PC-9 (cell line): ENCODE measurements at regions of chr11 and their contacts with region 1.

Region 1: DNA sequence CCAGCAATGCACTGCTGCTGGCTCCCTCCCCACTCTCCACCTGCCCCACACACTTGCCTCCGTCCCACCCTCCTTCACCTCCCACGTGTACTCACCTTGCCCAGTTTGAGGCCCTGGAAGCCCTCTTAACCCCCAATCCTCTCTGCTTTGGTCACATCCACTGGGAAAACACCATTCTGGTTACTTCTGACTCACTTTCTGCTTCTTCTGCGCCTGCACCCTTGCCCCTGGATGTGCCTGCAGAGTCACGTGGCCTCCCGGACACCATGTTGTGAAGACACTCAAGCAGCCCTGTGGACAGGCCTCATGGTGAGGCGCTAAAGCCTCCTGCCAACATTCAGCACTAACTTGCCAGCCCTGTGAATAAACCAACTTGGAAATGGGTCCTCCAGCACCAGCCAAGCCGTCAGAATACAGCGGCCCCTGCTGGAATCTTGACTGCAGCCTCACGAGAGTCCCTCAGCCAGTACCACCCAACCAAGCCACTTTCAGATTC is 2.6 kb upstream of the NAALADL1 start:
- DNase-seq: no peak
- H3K4me3 ChIP-seq: no peak overlapping the region
- H3K27ac ChIP-seq: no peak overlapping the region
- H3K4me1 ChIP-seq: no peaks in the 10 kb centered on the region
- H3K27me3 ChIP-seq: no peaks in the 10 kb centered on the region
- CTCF ChIP-seq: no peak

Region 2: GRCh38 chr11:64506731-64507130 is 554.2 kb before region 1 on chr11:
- CTCF ChIA-PET with region 1: interaction called, 11 read pairs
- POLR2A ChIA-PET with region 1: no interaction called
- intact Hi-C with region 1: no loop called
- DNase-seq: no peak
- H3K4me3 ChIP-seq: no peak overlapping the region
- H3K27ac ChIP-seq: no peak overlapping the region
- H3K4me1 ChIP-seq: no peaks in the 10 kb centered on the region
- H3K27me3 ChIP-seq: peaks cover 98% of the 10 kb centered on the region
- CTCF ChIP-seq: no peak

Region 3: GRCh38 chr11:65454696-65455456 is 393.9 kb after region 1 on chr11:
- CTCF ChIA-PET with region 1: no interaction called
- POLR2A ChIA-PET with region 1: no interaction called
- intact Hi-C with region 1: no loop called
- DNase-seq: peak; percentile 81 to 91
- H3K4me3 ChIP-seq: peak overlapping the region; percentile 58
- H3K27ac ChIP-seq: peak overlapping the region; percentile 21
- H3K4me1 ChIP-seq: peaks cover 25% of the 10 kb centered on the region
- H3K27me3 ChIP-seq: no peaks in the 10 kb centered on the region
- CTCF ChIP-seq: no peak